Mucosa of descending colon (tissue), 3 donors: ENCODE measurements at regions of chr7 and their contacts with region 1.

Region 1: DNA sequence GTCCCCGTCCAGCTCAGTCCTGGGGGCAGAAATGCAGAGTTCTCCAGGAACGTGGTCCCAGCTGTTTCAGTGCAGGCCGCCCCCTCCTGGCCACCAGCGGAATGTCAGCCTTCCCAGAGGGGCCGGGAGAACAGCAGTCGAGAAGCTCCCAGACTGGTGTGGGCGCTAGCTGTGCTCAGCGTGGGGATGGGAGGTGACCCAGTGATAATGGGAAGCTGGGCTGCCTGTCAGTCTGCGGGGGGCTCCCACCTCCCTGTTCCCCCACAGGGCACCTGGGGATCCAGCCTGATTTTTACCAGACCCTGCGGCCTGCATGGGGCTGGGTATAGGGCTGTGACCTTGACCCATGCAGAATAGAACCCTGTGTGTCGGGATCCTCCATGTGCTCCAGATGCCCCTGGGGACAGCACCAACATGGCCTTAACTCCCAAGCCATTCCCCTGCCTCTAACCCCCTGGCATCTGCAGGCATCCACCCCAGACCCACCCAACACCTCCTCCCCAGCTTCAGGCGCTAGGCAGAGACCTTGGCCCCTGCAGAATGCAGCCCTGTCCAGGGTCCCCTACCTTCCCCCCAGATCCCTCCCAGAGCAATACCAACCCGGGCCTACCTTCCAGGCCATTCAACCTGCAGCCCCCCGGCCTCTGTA is 946 bp upstream of the ELN start:
- DNase-seq: peak; percentile 72 to 87 (median 86)
- ATAC-seq: peak; percentile 79
- H3K4me3 ChIP-seq: no peak overlapping the region
- H3K4me1 ChIP-seq: no peaks in the 10 kb centered on the region
- CTCF ChIP-seq: peak; percentile 94

Region 2: GRCh38 chr7:73865738-73866445 is 161.1 kb before region 1 on chr7:
- intact Hi-C with region 1: loop called (anchors 10 kb)
- DNase-seq: peak in 1 of 3 donors; percentile 62
- ATAC-seq: peak; percentile 52
- H3K4me3 ChIP-seq: no peak overlapping the region
- H3K4me1 ChIP-seq: peaks cover 4% of the 10 kb centered on the region
- CTCF ChIP-seq: peak; percentile 19

Region 3: GRCh38 chr7:73879977-73880681 is 146.9 kb before region 1 on chr7:
- intact Hi-C with region 1: loop called in 1 of 2 experiments (anchors 10 kb)
- DNase-seq: peak in 1 of 3 donors; percentile 36
- ATAC-seq: peak; percentile 12
- H3K4me3 ChIP-seq: no peak overlapping the region
- H3K4me1 ChIP-seq: peaks cover 8% of the 10 kb centered on the region
- CTCF ChIP-seq: no peak

Region 4: GRCh38 chr7:73932364-73932763 is 94.7 kb before region 1 on chr7:
- intact Hi-C with region 1: no loop called
- DNase-seq: no peak
- ATAC-seq: no peak
- H3K4me3 ChIP-seq: no peak overlapping the region
- H3K4me1 ChIP-seq: no peaks in the 10 kb centered on the region
- CTCF ChIP-seq: no peak

Region 5: GRCh38 chr7:74690474-74690873 is 663.4 kb after region 1 on chr7:
- intact Hi-C with region 1: no loop called
- DNase-seq: no peak
- ATAC-seq: no peak
- H3K4me3 ChIP-seq: no peak overlapping the region
- H3K4me1 ChIP-seq: no peaks in the 10 kb centered on the region
- CTCF ChIP-seq: no peak